WTC11 (cell line): ENCODE measurements at regions of chr9 and their contacts with region 1.

Region 1: GRCh38 chr9:95193067-95193466 is 124.4 kb downstream of the FANCC start:
- DNase-seq: no peak
- ATAC-seq: peak; percentile 92
- H3K4me3 Mint-ChIP-seq: no peak overlapping the region
- H3K27ac Mint-ChIP-seq: peak overlapping the region; percentile 22; the same call in 1 of the 2 replicates
- H3K4me1 Mint-ChIP-seq: peaks cover 28% of the 10 kb centered on the region
- H3K27me3 Mint-ChIP-seq: no peaks in the 10 kb centered on the region
- CTCF ChIP-seq: peak; percentile 67

Region 2: GRCh38 chr9:94847486-94847885 is 345.6 kb before region 1 on chr9:
- CTCF ChIA-PET with region 1: no interaction called
- POLR2A ChIA-PET with region 1: no interaction called
- DNase-seq: no peak
- ATAC-seq: no peak
- H3K4me3 Mint-ChIP-seq: no peak overlapping the region
- H3K27ac Mint-ChIP-seq: no peak overlapping the region
- H3K4me1 Mint-ChIP-seq: peaks cover 9% of the 10 kb centered on the region
- H3K27me3 Mint-ChIP-seq: no peaks in the 10 kb centered on the region
- CTCF ChIP-seq: no peak

Region 3: GRCh38 chr9:95181226-95181818 is 11.7 kb before region 1 on chr9:
- CTCF ChIA-PET with region 1: interaction called, 18 read pairs
- POLR2A ChIA-PET with region 1: no interaction called
- DNase-seq: no peak
- ATAC-seq: no peak
- H3K4me3 Mint-ChIP-seq: no peak overlapping the region
- H3K27ac Mint-ChIP-seq: no peak overlapping the region
- H3K4me1 Mint-ChIP-seq: peaks cover 21% of the 10 kb centered on the region
- H3K27me3 Mint-ChIP-seq: no peaks in the 10 kb centered on the region
- CTCF ChIP-seq: peak; percentile 51

Region 4: DNA sequence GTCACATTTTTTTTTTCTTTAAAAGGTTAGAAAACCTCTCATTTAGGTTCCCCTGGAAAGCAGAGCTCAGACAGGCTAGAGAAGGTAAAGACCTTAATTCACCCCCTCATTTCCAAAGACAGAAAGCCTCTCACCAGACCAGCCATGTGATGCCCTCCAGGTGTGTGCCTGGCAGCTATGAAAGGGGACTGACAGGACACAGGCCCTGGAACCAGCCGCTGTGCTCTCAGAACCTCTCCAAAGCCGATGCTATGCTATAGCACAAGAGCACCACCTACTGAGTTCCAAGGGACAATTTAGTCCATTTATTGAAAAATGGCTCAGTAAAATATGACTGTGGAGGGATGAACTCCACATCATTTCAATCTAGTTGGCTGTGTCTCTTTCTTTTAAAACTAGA is 75.6 kb after region 1 on chr9:
- CTCF ChIA-PET with region 1: interaction called, 11 read pairs
- POLR2A ChIA-PET with region 1: no interaction called
- DNase-seq: peak; percentile 32
- ATAC-seq: peak; percentile 75
- H3K4me3 Mint-ChIP-seq: no peak overlapping the region
- H3K27ac Mint-ChIP-seq: no peak overlapping the region
- H3K4me1 Mint-ChIP-seq: peaks cover 32% of the 10 kb centered on the region
- H3K27me3 Mint-ChIP-seq: no peaks in the 10 kb centered on the region
- CTCF ChIP-seq: no peak